ENCODE measurements at regions of chr1 and their contacts with region 1.

Region 1: DNA sequence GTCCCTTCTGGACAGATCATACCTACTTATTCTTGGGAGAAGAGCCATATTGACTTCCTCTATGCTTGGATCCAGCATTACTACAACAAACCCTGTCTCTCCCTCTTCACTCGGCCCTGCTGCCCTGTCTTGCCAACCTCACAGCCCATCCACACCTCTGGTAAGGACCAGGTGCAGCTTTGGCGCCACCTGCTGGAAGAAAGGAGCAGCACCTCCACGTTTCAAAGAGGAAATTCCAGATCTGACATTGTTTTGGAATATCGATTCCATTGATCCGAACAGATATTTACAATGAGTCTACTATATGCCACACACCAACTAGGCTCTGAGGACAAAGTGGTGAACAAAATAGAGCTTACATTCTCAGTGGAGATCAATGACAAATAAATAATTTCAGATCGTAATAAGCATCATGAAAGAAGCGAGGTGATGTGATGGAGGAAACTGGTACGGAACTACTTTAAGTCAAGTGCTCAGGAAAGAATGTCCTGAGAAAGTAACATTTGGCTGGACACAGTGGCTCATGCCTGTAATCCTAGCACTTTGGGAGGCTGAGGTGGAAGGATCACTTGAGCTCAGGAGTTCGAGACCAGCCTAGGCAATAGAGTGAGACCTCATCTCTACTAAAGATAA is 18.7 kb downstream of the MFSD2A start:
- DNase-seq: peak; percentile 78
- ATAC-seq: peak; percentile 69
- H3K4me3 Mint-ChIP-seq: no peak overlapping the region
- H3K27ac Mint-ChIP-seq: no peak overlapping the region
- H3K4me1 Mint-ChIP-seq: no peaks in the 10 kb centered on the region
- H3K27me3 Mint-ChIP-seq: no peaks in the 10 kb centered on the region

Region 2: GRCh38 chr1:39816415-39817090 is 157.1 kb before region 1 on chr1:
- CTCF ChIA-PET with region 1: interaction called, 37 read pairs
- DNase-seq: peak; percentile 57
- ATAC-seq: peak; percentile 68
- H3K4me3 Mint-ChIP-seq: no peak overlapping the region
- H3K27ac Mint-ChIP-seq: peak overlapping the region; percentile 30
- H3K4me1 Mint-ChIP-seq: peaks cover 5% of the 10 kb centered on the region
- H3K27me3 Mint-ChIP-seq: peaks cover 18% of the 10 kb centered on the region

Region 3: DNA sequence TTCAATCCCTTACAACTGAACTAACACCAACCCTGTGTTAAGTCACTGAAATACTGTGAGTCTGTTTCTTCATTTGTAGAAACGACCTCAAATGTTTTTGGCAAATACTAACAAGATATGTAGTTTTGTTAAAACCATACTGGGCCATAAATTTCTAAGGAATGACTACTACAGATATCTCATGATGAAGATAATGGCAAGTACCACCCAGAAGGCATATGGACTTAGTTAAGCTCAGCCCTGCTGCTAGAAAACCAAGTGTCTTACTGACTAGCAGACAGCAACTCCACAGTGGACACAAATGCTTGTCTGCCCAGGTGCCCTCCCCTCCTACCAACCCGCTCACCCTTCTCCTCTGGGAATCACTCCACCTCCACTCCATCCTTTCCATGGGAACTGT is 140.5 kb before region 1 on chr1:
- CTCF ChIA-PET with region 1: no interaction called
- DNase-seq: no peak
- ATAC-seq: no peak
- H3K4me3 Mint-ChIP-seq: no peak overlapping the region
- H3K27ac Mint-ChIP-seq: no peak overlapping the region
- H3K4me1 Mint-ChIP-seq: no peaks in the 10 kb centered on the region
- H3K27me3 Mint-ChIP-seq: peaks cover 19% of the 10 kb centered on the region

Region 4: GRCh38 chr1:39876144-39876543 is 97.5 kb before region 1 on chr1:
- CTCF ChIA-PET with region 1: no interaction called
- DNase-seq: no peak
- ATAC-seq: no peak
- H3K4me3 Mint-ChIP-seq: no peak overlapping the region
- H3K27ac Mint-ChIP-seq: no peak overlapping the region
- H3K4me1 Mint-ChIP-seq: peaks cover 34% of the 10 kb centered on the region
- H3K27me3 Mint-ChIP-seq: no peaks in the 10 kb centered on the region

Region 5: DNA sequence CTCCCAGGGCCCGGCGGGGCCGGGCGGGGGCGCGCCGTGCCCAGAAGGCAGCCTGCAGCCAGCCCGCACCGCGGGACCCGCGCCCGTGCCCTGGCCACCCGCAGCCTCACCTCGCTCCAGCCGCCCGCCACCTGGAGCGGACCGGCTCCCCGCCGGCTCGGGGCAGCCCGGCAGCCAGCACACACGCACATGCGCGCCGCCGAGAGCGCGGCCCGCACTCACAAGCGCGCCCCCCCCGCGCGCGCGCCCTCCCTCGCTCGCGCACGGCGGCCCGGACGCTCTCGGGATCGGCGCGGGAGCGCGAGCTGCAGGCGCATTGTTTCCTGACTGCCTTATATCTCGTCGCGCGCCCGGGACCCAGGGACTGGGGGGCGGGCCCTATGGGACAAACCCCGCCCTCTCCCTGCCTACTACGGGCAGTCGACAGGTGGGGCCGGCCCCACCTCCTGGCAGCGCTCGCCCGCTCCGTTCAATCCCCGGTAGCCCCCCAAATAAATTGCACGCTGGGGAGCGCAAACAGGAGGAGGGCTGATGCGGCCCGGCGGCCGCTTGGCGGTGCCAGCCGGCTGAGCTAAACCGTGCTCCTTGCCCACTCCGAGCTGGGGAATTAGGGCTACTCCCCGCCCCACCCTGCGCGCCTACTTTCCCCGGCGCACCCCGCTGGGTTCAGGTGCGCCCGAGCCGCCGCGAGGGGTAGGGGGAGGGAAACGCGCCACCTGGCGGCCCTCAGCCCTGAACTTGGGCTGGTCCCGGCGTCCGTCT is 71.7 kb before region 1 on chr1 and contains the start of gene MYCL:
- CTCF ChIA-PET with region 1: interaction called, 28 read pairs
- DNase-seq: peak; percentile 83
- ATAC-seq: peak; percentile 89
- H3K4me3 Mint-ChIP-seq: peak within 1 kb of the TSS; percentile 60
- H3K27ac Mint-ChIP-seq: no peak within 1 kb of the TSS
- H3K4me1 Mint-ChIP-seq: peaks cover 7% of the 10 kb centered on the region
- H3K27me3 Mint-ChIP-seq: peaks cover 71% of the 10 kb centered on the region
- total RNA-seq, gene MYCL: 0.12 to 0.26 TPM

Region 6: GRCh38 chr1:39919545-39919944 is 54.1 kb before region 1 on chr1:
- CTCF ChIA-PET with region 1: interaction called, 70 read pairs
- DNase-seq: peak; percentile 55
- ATAC-seq: peak; percentile 90
- H3K4me3 Mint-ChIP-seq: no peak overlapping the region
- H3K27ac Mint-ChIP-seq: no peak overlapping the region
- H3K4me1 Mint-ChIP-seq: no peaks in the 10 kb centered on the region
- H3K27me3 Mint-ChIP-seq: peaks cover 9% of the 10 kb centered on the region

Region 7: DNA sequence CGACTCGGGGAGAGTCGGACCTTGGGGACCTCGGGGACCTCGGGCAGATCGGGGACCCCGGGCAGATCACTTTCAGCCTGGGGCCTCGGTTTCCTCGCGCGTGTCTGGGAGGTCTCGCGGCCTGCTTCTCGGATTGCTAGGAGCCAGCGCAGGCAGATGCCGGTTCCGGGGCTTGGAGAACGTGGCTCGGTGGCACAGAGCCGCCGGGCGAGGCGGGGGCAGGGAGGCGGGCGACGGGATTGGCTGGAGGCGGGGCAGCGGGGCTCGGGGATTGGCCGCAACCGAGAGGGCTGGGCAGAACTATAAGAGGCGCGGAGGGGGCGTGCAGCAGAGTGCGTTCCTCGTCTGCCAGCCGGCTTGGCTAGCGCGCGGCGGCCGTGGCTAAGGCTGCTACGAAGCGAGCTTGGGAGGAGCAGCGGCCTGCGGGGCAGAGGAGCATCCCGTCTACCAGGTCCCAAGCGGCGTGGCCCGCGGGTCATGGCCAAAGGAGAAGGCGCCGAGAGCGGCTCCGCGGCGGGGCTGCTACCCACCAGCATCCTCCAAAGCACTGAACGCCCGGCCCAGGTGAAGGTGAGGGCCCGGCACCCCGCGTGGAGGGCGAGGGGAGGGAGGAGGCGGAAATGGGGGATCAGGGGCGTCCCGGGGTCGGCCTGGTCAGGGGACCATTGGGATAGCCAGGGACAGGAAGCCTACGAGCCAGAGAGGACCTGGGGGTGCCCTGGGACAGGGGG is 18.6 kb before region 1 on chr1 and contains the start of gene MFSD2A:
- CTCF ChIA-PET with region 1: interaction called, 28 read pairs
- DNase-seq: peak; percentile 88
- ATAC-seq: peak; percentile 92
- H3K4me3 Mint-ChIP-seq: peak within 1 kb of the TSS; percentile 85
- H3K27ac Mint-ChIP-seq: peak within 1 kb of the TSS; percentile 63
- H3K4me1 Mint-ChIP-seq: peaks cover 12% of the 10 kb centered on the region
- H3K27me3 Mint-ChIP-seq: peaks cover 7% of the 10 kb centered on the region
- total RNA-seq, gene MFSD2A: 2.9 to 7.0 TPM

Measured in activated CD8-positive, alpha-beta memory T cell treated with anti-CD3 and anti-CD28 coated beads, Interleukin-2, amount 10 ng/mL, durations not matched to agents 7 days and 5 days (primary cell).